ENCODE measurements at regions of chr11 and their contacts with region 1.

Region 1: GRCh38 chr11:110429731-110430266 is at the start of gene FDX1:
- DNase-seq: peak; percentile 78
- H3K4me3 Mint-ChIP-seq: peak within 1 kb of the TSS; percentile 97
- H3K27ac Mint-ChIP-seq: peak within 1 kb of the TSS; percentile 97
- H3K4me1 Mint-ChIP-seq: peaks cover 41% of the 10 kb centered on the region
- H3K27me3 Mint-ChIP-seq: no peaks in the 10 kb centered on the region
- total RNA-seq, gene FDX1: 8.2 to 8.8 TPM

Region 2: DNA sequence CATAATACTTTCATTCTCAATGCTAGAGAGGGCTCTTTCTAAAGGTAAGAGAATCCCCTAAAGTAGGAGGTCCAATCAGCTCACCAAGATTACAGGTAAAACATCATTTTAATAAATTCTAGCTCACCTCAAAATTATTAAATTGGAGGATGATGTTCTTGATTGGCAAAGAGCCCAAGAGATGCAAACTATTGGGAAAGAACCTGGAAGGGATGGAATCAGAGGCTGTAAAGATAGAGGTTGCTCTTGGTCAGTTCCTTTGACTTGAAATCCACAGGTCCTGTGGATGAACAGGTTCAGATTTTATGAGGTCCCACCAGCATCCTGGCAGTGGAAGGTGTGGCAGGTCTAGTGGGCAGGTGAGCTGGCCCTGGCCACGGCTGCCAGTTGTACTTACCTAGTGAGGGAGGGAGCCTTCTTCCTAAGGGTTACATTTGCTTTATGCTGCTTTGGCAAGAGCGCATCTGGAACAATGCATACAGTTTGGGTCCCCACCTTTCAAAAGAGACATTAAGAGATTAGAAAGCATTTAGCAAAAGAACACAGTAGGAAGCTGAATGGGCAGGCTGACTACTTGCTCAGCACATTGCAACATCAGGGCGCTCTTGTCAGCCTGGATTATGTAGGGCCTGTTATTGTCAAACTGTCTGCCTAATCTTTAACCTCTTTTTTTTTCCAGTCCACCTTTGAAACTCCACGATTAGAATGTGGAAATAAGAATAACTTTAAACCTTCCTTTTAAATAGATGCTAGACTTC is 230.4 kb before region 1 on chr11:
- CTCF ChIA-PET with region 1: interaction called, 14 read pairs
- POLR2A ChIA-PET with region 1: no interaction called
- DNase-seq: no peak
- H3K4me3 Mint-ChIP-seq: no peak overlapping the region
- H3K27ac Mint-ChIP-seq: no peak overlapping the region
- H3K4me1 Mint-ChIP-seq: no peaks in the 10 kb centered on the region
- H3K27me3 Mint-ChIP-seq: no peaks in the 10 kb centered on the region

Region 3: DNA sequence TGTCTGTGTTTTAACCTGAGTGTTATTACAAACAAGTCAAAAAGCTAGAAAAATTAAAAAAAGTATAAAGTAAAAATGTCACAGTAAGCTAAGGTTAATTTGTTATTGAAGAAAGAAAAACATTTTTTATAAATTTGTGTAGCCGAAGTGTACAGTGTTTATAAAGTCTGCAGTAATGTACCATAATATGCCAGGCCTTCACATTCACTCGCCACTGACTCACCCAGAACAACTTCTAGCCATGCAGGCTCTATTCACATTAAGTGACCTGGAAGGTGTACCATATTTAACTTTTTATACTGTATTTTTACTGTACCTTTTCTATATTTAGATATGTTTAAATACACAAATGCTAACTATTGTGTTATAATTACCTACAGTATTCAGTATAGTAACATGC is 14.7 kb before region 1 on chr11:
- CTCF ChIA-PET with region 1: interaction called, 24 read pairs
- POLR2A ChIA-PET with region 1: no interaction called
- DNase-seq: no peak
- H3K4me3 Mint-ChIP-seq: no peak overlapping the region
- H3K27ac Mint-ChIP-seq: no peak overlapping the region
- H3K4me1 Mint-ChIP-seq: no peaks in the 10 kb centered on the region
- H3K27me3 Mint-ChIP-seq: no peaks in the 10 kb centered on the region

Region 4: DNA sequence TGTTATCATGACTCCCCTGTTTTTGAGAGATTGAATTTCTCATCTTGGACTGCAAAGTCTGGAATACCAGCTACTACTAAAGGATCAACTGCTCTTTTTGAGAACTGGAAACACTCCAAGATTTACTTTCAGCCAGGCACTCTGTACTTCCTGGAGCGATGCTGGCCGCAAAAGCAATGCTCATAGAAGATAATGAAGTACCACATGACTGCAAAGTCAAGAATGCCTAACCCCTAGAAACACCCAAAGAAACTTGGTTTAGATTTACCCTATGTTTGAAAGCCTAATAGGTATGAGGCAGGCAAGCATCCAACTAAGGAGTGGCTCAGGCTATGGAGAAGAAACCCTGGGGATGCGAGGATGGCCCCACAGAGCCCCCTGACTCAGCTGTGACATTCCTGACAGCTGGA is 330.2 kb after region 1 on chr11:
- CTCF ChIA-PET with region 1: no interaction called
- POLR2A ChIA-PET with region 1: no interaction called
- DNase-seq: no peak
- H3K4me3 Mint-ChIP-seq: no peak overlapping the region
- H3K27ac Mint-ChIP-seq: no peak overlapping the region
- H3K4me1 Mint-ChIP-seq: no peaks in the 10 kb centered on the region
- H3K27me3 Mint-ChIP-seq: peaks cover 1% of the 10 kb centered on the region